ENCODE measurements at regions of chr7 and their contacts with region 1.

Region 1: GRCh38 chr7:36037121-36037662 is 115.9 kb upstream of the EEPD1 start:
- DNase-seq: peak; percentile 94
- H3K4me3 ChIP-seq: no peak overlapping the region
- H3K27ac ChIP-seq: peak overlapping the region; percentile 44
- H3K4me1 ChIP-seq: peaks cover 25% of the 10 kb centered on the region
- H3K27me3 ChIP-seq: no peaks in the 10 kb centered on the region
- CTCF ChIP-seq: no peak

Region 2: DNA sequence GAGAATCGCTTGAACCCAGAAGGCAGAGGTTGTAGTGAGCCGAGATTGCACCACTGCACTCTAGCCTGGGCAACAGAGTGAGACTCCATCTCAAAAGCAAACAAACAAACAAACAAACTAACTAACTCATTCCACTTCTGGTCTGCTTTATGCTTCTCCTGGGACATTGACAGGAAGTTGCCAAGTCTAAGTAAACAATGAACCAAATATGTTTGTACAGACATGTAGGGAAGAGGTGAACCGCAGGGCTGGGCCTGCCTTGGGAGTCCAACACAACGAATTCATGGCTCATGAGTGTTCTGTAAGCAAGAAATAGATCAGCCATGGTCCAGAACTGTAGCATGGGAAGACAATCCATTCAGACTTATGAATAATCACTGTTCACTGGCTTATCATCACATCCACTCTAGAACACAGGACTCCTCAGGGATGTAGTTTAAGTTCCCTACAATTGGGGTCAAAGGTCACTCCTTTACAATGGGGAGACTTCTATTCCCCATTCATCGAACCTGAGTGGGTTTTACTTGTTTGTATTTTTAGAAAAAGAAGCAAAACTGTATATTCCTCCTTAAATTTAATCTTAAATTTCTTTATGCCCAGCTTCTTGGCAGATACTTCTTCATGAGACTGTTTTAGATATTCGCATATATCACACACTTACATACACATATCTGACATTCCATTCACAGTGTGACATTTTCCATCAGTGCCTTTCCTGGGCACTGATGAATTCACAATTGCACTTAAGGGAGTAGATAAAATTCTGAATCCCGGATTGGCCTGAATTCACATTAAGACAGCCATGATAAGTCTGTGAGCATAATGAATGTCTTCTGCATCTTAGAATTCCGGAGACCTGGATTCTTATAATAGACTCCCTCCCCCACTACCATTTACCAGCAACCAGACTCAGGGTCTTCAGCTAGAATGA is 43.3 kb before region 1 on chr7:
- CTCF ChIA-PET with region 1: no interaction called
- dilution Hi-C with region 1: no loop called
- in situ Hi-C with region 1: no loop called
- intact Hi-C with region 1: loop called (anchors 2 kb)
- DNase-seq: peak; percentile 56
- H3K4me3 ChIP-seq: no peak overlapping the region
- H3K27ac ChIP-seq: no peak overlapping the region
- H3K4me1 ChIP-seq: peaks cover 5% of the 10 kb centered on the region
- H3K27me3 ChIP-seq: no peaks in the 10 kb centered on the region
- CTCF ChIP-seq: no peak

Region 3: DNA sequence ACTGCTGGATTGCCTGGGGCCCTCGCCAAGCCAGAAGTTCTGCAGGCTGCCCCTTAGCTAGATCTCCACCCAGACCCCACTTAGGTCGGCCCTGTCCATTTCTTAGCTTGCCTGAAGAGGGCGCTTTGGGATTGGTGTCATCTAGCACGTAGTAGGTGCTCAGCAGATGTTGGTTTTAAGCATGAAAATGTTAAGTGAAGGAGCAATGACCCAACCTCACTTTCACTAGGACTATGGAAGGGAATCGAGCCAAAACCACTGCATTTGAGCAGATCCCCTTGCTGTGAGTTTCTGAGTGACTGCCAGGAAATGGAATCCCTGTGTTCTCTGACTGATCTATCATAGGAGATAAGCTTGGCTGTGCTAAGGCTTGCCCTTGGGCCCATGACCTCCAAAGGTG is 15.8 kb before region 1 on chr7:
- CTCF ChIA-PET with region 1: interaction called, 12 read pairs
- dilution Hi-C with region 1: no loop called
- in situ Hi-C with region 1: no loop called
- intact Hi-C with region 1: no loop called
- DNase-seq: no peak
- H3K4me3 ChIP-seq: no peak overlapping the region
- H3K27ac ChIP-seq: no peak overlapping the region
- H3K4me1 ChIP-seq: no peaks in the 10 kb centered on the region
- H3K27me3 ChIP-seq: no peaks in the 10 kb centered on the region
- CTCF ChIP-seq: peak; percentile 40 to 59

Region 4: GRCh38 chr7:36048141-36048901 is 11.1 kb after region 1 on chr7:
- CTCF ChIA-PET with region 1: no interaction called
- dilution Hi-C with region 1: no loop called
- in situ Hi-C with region 1: no loop called
- intact Hi-C with region 1: no loop called
- DNase-seq: peak; percentile 83
- H3K4me3 ChIP-seq: no peak overlapping the region
- H3K27ac ChIP-seq: no peak overlapping the region
- H3K4me1 ChIP-seq: peaks cover 18% of the 10 kb centered on the region
- H3K27me3 ChIP-seq: no peaks in the 10 kb centered on the region
- CTCF ChIP-seq: no peak

Region 5: DNA sequence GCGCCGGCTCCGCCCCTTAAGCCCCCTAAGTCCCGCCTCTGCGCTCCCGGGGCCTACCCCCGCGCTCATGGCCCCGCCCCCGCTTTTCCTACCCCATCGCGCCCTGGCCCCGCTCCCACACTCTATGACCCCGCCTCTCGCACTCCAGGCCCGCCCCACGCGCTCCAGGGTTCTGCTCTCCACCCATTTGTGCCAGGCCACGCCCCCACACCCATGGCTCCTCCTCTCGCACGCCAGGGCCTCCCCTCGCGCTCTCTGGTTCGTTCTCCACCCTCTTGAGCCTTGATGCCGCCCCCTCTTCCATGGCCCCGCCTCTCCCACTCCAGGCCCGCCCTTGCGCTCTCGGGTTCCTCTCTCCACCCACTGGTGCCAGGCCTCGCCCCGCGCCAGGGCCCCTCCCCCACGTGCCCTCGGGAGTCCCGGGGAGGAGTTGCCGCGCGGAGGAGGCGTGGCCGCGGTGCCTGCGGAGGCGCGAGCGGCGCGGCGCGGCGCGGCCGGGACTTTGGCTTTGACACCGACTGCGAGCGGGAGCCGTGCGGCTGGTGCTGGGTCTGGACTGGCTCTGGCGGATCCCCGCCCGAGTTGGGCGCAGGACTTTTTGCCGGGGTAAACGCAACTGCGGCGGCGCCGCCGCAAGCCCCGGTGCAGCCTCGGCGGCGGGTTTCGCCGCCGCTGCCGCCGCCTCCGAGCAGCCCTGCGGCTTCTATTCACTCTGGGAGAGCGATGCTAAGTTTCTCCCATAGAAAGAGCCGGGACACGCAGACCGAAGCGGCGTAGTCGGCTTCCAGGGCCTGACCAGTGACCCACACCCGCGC is 115.8 kb after region 1 on chr7 and contains the start of gene EEPD1:
- CTCF ChIA-PET with region 1: no interaction called
- dilution Hi-C with region 1: no loop called
- in situ Hi-C with region 1: no loop called
- intact Hi-C with region 1: loop called (anchors 5 kb)
- DNase-seq: peak; percentile 99
- H3K4me3 ChIP-seq: peak within 1 kb of the TSS; percentile 67 to 79 (median 74)
- H3K27ac ChIP-seq: peak within 1 kb of the TSS; percentile 24
- H3K4me1 ChIP-seq: peaks cover 18% of the 10 kb centered on the region
- H3K27me3 ChIP-seq: no peaks in the 10 kb centered on the region
- CTCF ChIP-seq: no peak
- total RNA-seq, gene EEPD1: 1.9 to 2.0 TPM